Caco-2 (cell line): ENCODE measurements at regions of chr20 and their contacts with region 1.

Region 1: DNA sequence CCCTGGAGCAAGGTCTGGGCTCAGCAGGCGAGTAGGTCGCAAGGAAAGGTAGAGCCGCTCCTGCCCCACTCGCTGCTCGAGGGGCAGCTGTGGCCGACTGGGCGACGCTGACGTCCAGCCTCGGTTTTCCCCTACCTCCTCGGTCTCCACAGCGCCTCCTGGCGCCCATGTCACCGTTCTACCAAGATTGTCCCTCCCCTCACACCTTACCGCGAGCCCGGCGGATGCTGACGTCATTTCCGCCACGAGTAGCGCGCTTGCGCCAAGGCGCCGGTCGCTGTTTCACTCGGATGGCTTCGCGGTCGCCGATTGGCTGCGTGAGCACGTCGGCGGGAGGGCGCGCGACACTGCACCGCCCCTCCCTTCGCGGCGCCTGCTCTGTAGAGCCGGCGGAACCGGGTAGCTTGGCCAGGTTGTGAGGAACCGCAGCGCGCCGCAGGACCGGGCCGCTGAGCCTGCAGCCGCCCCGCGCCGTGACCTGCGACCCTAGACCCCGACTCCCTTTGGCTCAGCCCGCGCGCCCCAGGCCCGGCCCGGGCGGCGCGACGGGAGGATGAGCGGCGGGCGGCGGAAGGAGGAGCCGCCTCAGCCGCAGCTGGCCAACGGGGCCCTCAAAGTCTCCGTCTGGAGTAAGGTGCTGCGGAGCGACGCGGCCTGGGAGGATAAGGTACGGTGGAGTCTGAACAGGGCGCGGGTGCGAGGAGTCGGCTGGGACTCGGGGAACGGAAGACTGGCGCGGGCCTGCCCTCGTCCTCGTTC is at the start of gene RAB5IF:
- DNase-seq: peak; percentile 100
- H3K4me3 ChIP-seq: peak within 1 kb of the TSS; percentile 85
- H3K4me3 Mint-ChIP-seq: peak within 1 kb of the TSS; percentile 91
- H3K27ac Mint-ChIP-seq: peak within 1 kb of the TSS; percentile 89
- H3K4me1 ChIP-seq: peaks cover 19% of the 10 kb centered on the region
- H3K4me1 Mint-ChIP-seq: peaks cover 17% of the 10 kb centered on the region
- H3K27me3 ChIP-seq: no peaks in the 10 kb centered on the region
- H3K27me3 Mint-ChIP-seq: no peaks in the 10 kb centered on the region
- CTCF ChIP-seq: peak; percentile 98 to 99
- total RNA-seq, gene RAB5IF: 279 and 282 TPM in 2 replicates

Region 2: DNA sequence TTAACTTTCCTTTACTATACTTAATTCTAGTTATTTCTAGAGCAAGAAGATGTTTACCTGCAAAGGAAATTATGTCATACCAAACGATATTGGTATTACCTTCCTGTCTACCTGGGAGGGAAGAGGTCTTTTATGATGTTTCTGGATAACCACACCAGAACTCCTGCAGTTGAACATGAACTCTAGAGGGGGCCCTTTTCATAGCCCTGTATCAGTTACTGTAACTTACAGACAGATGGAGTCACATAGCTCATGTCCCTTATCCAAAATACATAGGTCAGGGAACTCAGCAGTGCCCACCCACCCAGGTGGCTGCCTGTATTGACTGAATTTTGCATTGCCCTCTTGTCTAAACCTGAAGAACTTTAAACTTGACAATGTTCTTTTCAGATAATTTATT is 99.3 kb before region 1 on chr20:
- CTCF ChIA-PET with region 1: interaction called, 13 read pairs
- POLR2A ChIA-PET with region 1: no interaction called
- intact Hi-C with region 1: loop called (anchors 1 kb)
- DNase-seq: peak in 1 of 2 experiments; percentile 55
- H3K4me3 ChIP-seq: no peak overlapping the region
- H3K4me3 Mint-ChIP-seq: no peak overlapping the region
- H3K27ac Mint-ChIP-seq: no peak overlapping the region
- H3K4me1 ChIP-seq: no peaks in the 10 kb centered on the region
- H3K4me1 Mint-ChIP-seq: no peaks in the 10 kb centered on the region
- H3K27me3 ChIP-seq: no peaks in the 10 kb centered on the region
- H3K27me3 Mint-ChIP-seq: no peaks in the 10 kb centered on the region
- CTCF ChIP-seq: peak; percentile 58 to 73

Region 3: GRCh38 chr20:36550797-36551299 is 54.7 kb before region 1 on chr20:
- CTCF ChIA-PET with region 1: interaction called, 3 read pairs
- POLR2A ChIA-PET with region 1: no interaction called
- intact Hi-C with region 1: loop called (anchors 1 kb)
- DNase-seq: no peak
- H3K4me3 ChIP-seq: no peak overlapping the region
- H3K4me3 Mint-ChIP-seq: no peak overlapping the region
- H3K27ac Mint-ChIP-seq: no peak overlapping the region
- H3K4me1 ChIP-seq: no peaks in the 10 kb centered on the region
- H3K4me1 Mint-ChIP-seq: no peaks in the 10 kb centered on the region
- H3K27me3 ChIP-seq: no peaks in the 10 kb centered on the region
- H3K27me3 Mint-ChIP-seq: peaks cover 2% of the 10 kb centered on the region
- CTCF ChIP-seq: no peak

Region 4: GRCh38 chr20:36573103-36573794 is 32.3 kb before region 1 on chr20 and contains the start of gene TGIF2:
- CTCF ChIA-PET with region 1: interaction called, 31 read pairs
- POLR2A ChIA-PET with region 1: interaction called, 27 read pairs
- intact Hi-C with region 1: loop called (anchors 1 kb)
- DNase-seq: peak; percentile 96 to 99
- H3K4me3 ChIP-seq: peak within 1 kb of the TSS; percentile 82
- H3K4me3 Mint-ChIP-seq: peak within 1 kb of the TSS; percentile 79
- H3K27ac Mint-ChIP-seq: peak within 1 kb of the TSS; percentile 63
- H3K4me1 ChIP-seq: peaks cover 29% of the 10 kb centered on the region
- H3K4me1 Mint-ChIP-seq: peaks cover 12% of the 10 kb centered on the region
- H3K27me3 ChIP-seq: no peaks in the 10 kb centered on the region
- H3K27me3 Mint-ChIP-seq: no peaks in the 10 kb centered on the region
- CTCF ChIP-seq: no peak
- total RNA-seq, gene TGIF2: 58.4 and 60.6 TPM in 2 replicates

Region 5: DNA sequence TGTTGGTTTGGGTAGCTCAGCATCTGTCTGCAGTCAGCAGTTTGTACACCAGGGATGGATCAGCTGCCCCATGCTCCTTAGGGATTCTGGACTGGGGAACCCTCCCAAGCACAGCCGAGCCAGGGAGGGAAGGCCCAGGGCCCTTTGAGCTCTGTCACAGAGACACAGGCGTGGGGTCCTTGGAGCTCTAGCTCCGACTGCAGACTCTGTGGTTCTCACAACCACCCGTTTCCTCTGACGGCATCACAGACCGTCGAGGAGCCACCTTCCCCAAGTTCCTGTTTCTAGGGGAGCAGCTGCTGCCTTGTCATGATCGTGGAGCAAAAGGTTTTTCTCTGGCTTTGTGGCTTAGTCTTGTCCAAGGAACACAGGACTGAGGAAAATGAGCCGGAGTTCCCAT is 40.4 kb after region 1 on chr20 and contains the start of gene SLA2:
- CTCF ChIA-PET with region 1: interaction called, 13 read pairs
- POLR2A ChIA-PET with region 1: no interaction called
- intact Hi-C with region 1: no loop called
- DNase-seq: no peak
- H3K4me3 ChIP-seq: no peak within 1 kb of the TSS
- H3K4me3 Mint-ChIP-seq: no peak within 1 kb of the TSS
- H3K27ac Mint-ChIP-seq: peak within 1 kb of the TSS; percentile 5
- H3K4me1 ChIP-seq: peaks cover 11% of the 10 kb centered on the region
- H3K4me1 Mint-ChIP-seq: peaks cover 9% of the 10 kb centered on the region
- H3K27me3 ChIP-seq: no peaks in the 10 kb centered on the region
- H3K27me3 Mint-ChIP-seq: no peaks in the 10 kb centered on the region
- CTCF ChIP-seq: no peak
- total RNA-seq, gene SLA2: 0.19 and 0.20 TPM in 2 replicates

Region 6: GRCh38 chr20:36908603-36909002 is 303.0 kb after region 1 on chr20:
- CTCF ChIA-PET with region 1: no interaction called
- POLR2A ChIA-PET with region 1: no interaction called
- intact Hi-C with region 1: no loop called
- DNase-seq: no peak
- H3K4me3 ChIP-seq: no peak overlapping the region
- H3K4me3 Mint-ChIP-seq: no peak overlapping the region
- H3K27ac Mint-ChIP-seq: no peak overlapping the region
- H3K4me1 ChIP-seq: no peaks in the 10 kb centered on the region
- H3K4me1 Mint-ChIP-seq: no peaks in the 10 kb centered on the region
- H3K27me3 ChIP-seq: no peaks in the 10 kb centered on the region
- H3K27me3 Mint-ChIP-seq: no peaks in the 10 kb centered on the region
- CTCF ChIP-seq: no peak